GM12878 (cell line): ENCODE measurements at regions of chr12 and their contacts with region 1.

Region 1: DNA sequence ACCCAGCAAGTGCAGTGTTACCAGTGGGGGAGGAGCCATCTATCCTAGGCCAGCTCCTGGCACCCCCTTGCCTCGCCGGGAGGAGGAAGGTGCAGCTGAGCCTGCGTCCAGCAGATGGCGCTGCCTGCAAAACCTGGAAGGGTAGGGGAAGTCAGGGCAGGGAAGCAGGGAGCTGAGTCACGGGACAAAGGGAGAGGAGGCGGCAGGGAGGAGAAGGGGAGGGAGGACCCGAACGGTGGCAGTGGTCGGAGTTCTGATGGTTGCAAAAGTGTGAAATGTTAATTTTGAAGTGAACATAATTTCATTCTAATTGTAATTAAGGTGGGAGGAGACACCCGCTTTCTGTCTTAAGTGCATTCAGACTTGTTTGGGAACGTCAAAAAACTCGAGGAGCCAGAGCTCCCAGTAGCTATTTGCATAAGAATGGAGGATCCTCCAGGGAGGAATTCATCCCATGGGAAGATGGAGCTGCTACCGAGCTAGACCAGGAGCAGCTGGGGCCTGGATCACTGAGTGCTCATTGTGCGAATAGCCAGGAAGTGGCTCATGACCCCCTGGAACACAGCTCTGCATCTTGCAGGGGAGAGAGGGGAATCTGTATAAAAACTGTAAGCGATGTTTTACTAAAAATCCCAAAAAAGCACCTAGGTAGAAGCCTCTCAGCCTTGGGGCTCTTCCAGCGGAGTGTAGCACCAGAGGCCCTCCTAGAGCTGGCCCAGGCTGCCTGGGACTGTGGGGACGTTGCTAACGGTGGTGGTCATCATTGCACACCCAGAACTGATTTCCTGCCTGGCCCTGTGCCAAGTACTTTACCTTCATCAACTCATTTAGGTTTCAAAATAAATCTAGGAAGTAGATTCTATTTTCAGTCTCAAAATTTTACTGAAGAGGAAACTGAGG is 59.5 kb downstream of the EMP1 start:
- DNase-seq: peak; percentile 28
- ATAC-seq: peak; percentile 100
- H3K4me3 ChIP-seq: no peak overlapping the region
- H3K27ac ChIP-seq: no peak overlapping the region
- H3K4me1 ChIP-seq: no peaks in the 10 kb centered on the region
- H3K27me3 ChIP-seq: 0 out of 4 replicates have a peak, but pooled peaks cover 1 to 5% of the 10 kb centered on the region in 2 experiments
- CTCF ChIP-seq: peak; percentile 89 to 98 (median 94)
- EP300 ChIP-seq: no peak
- POLR2A ChIP-seq: no peak
- RAD21 ChIP-seq: peak; percentile 65

Region 2: GRCh38 chr12:12546314-12546772 is 709.7 kb before region 1 on chr12:
- CTCF ChIA-PET with region 1: no interaction called
- POLR2A ChIA-PET with region 1: no interaction called
- RAD21 ChIA-PET with region 1: no interaction called
- SMC1A ChIA-PET with region 1: no interaction called
- in situ Hi-C with region 1: no loop called
- intact Hi-C with region 1: no loop called
- DNase-seq: no peak
- ATAC-seq: peak; percentile 9; the same call in 1 of the 3 replicates
- H3K4me3 ChIP-seq: no peak overlapping the region
- H3K27ac ChIP-seq: no peak overlapping the region
- H3K4me1 ChIP-seq: peaks cover 10% of the 10 kb centered on the region; the same call in 1 of the 2 replicates
- H3K27me3 ChIP-seq: no peaks in the 10 kb centered on the region
- CTCF ChIP-seq: no peak
- EP300 ChIP-seq: no peak
- POLR2A ChIP-seq: no peak
- RAD21 ChIP-seq: no peak

Region 3: DNA sequence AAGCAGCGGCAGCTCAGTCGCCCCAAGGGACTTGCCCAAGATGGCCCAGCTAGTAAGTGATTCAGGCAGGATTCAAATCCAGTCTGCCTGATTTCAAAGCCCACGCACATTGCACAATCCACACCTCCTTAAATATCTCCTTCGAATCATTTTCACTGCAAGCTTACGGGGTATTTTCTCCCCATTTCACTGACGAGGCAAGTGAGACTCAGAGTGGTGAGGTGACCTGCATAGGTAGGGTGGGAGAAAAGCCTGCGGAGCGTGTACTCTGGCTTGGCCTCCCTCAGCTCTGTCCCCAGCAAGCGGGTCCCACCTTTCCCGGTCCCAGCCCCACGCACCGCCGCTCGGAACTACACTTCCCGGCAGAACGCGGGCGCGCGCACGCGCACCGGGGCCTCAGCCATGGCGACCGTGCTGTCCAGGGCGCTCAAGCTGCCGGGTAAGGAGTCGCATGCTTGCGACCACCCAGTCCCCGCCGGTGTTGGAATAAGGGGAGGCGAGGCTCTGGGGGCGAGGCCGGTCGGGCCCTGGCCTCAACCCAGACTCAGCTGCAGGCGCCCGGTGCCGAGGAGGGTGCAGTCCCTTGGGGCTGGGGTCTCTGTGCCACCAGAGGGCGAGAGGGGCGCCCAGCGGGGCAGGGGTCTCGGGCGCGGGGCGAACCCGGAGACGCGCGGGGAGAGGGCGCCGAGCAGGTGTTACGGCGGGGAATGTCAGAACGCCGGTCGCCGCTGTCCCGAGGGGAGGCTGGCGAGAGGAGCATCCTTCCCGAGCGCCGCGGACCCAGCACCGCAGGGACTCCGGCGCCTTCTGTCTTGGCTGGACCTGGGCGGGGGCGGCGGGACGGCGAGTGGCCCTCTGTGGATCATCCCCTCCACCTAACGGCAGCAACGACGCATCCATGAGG is 211.8 kb before region 1 on chr12 and contains the start of gene FAM234B:
- CTCF ChIA-PET with region 1: no interaction called
- POLR2A ChIA-PET with region 1: no interaction called
- RAD21 ChIA-PET with region 1: no interaction called
- SMC1A ChIA-PET with region 1: no interaction called
- in situ Hi-C with region 1: no loop called
- intact Hi-C with region 1: no loop called
- DNase-seq: no peak
- ATAC-seq: peak; percentile 99
- H3K4me3 ChIP-seq: peak within 1 kb of the TSS; percentile 95
- H3K27ac ChIP-seq: no peak within 1 kb of the TSS
- H3K4me1 ChIP-seq: no peaks in the 10 kb centered on the region
- H3K27me3 ChIP-seq: peaks cover 0 to 8% of the 10 kb centered on the region in 2 experiments; a peak in 2 of 4 replicates
- CTCF ChIP-seq: peak in 1 of 3 experiments; percentile 23; a peak in 1 of 6 replicates
- EP300 ChIP-seq: no peak
- POLR2A ChIP-seq: peak; percentile 22; the same call in 1 of the 2 replicates
- RAD21 ChIP-seq: no peak
- polyA plus RNA-seq, gene FAM234B: 0.09 to 0.16 TPM

Region 4: GRCh38 chr12:13079440-13079906 is 176.6 kb before region 1 on chr12:
- CTCF ChIA-PET with region 1: no interaction called
- POLR2A ChIA-PET with region 1: no interaction called
- RAD21 ChIA-PET with region 1: no interaction called
- SMC1A ChIA-PET with region 1: no interaction called
- in situ Hi-C with region 1: no loop called
- intact Hi-C with region 1: no loop called
- DNase-seq: no peak
- ATAC-seq: no peak
- H3K4me3 ChIP-seq: no peak overlapping the region
- H3K27ac ChIP-seq: no peak overlapping the region
- H3K4me1 ChIP-seq: no peaks in the 10 kb centered on the region
- H3K27me3 ChIP-seq: no peaks in the 10 kb centered on the region
- CTCF ChIP-seq: no peak
- EP300 ChIP-seq: no peak
- POLR2A ChIP-seq: no peak
- RAD21 ChIP-seq: no peak

Region 5: GRCh38 chr12:13270817-13271216 is 14.8 kb after region 1 on chr12:
- CTCF ChIA-PET with region 1: interaction called, 12 read pairs
- POLR2A ChIA-PET with region 1: no interaction called
- RAD21 ChIA-PET with region 1: no interaction called
- SMC1A ChIA-PET with region 1: no interaction called
- in situ Hi-C with region 1: no loop called
- intact Hi-C with region 1: no loop called
- DNase-seq: no peak
- ATAC-seq: no peak
- H3K4me3 ChIP-seq: no peak overlapping the region
- H3K27ac ChIP-seq: no peak overlapping the region
- H3K4me1 ChIP-seq: no peaks in the 10 kb centered on the region
- H3K27me3 ChIP-seq: peaks cover 0 to 3% of the 10 kb centered on the region in 2 experiments; a peak in 1 of 4 replicates
- CTCF ChIP-seq: no peak
- EP300 ChIP-seq: no peak
- POLR2A ChIP-seq: no peak
- RAD21 ChIP-seq: no peak

Region 6: DNA sequence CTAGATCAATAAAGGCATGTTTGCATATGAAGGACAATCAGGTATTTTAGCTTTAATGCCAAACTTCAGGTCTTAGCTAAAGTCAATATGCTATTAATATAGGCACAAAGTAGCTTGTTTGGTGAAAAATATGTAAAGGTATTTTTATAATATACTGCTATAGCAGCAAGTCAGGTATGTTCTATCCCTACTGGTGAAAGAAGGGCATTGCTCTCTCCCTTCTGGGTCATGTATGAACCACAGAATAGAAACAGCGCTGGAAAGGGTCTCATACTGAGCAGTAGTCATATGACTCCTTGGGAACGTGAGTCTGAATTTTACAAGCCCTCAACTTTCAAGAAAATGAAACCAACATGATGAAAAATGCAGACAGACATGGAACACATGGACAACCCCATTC is 410.8 kb after region 1 on chr12:
- CTCF ChIA-PET with region 1: interaction called, 19 read pairs
- POLR2A ChIA-PET with region 1: no interaction called
- RAD21 ChIA-PET with region 1: no interaction called
- SMC1A ChIA-PET with region 1: interaction called, 10 read pairs
- in situ Hi-C with region 1: no loop called
- intact Hi-C with region 1: loop called (anchors 5 kb)
- DNase-seq: no peak
- ATAC-seq: peak; percentile 74
- H3K4me3 ChIP-seq: no peak overlapping the region
- H3K27ac ChIP-seq: no peak overlapping the region
- H3K4me1 ChIP-seq: no peaks in the 10 kb centered on the region
- H3K27me3 ChIP-seq: no peaks in the 10 kb centered on the region; a peak in 2 of 4 replicates
- CTCF ChIP-seq: peak in 2 of 3 experiments; percentile 24 to 39; a peak in 2 of 6 replicates
- EP300 ChIP-seq: no peak
- POLR2A ChIP-seq: no peak
- RAD21 ChIP-seq: no peak

Region 7: DNA sequence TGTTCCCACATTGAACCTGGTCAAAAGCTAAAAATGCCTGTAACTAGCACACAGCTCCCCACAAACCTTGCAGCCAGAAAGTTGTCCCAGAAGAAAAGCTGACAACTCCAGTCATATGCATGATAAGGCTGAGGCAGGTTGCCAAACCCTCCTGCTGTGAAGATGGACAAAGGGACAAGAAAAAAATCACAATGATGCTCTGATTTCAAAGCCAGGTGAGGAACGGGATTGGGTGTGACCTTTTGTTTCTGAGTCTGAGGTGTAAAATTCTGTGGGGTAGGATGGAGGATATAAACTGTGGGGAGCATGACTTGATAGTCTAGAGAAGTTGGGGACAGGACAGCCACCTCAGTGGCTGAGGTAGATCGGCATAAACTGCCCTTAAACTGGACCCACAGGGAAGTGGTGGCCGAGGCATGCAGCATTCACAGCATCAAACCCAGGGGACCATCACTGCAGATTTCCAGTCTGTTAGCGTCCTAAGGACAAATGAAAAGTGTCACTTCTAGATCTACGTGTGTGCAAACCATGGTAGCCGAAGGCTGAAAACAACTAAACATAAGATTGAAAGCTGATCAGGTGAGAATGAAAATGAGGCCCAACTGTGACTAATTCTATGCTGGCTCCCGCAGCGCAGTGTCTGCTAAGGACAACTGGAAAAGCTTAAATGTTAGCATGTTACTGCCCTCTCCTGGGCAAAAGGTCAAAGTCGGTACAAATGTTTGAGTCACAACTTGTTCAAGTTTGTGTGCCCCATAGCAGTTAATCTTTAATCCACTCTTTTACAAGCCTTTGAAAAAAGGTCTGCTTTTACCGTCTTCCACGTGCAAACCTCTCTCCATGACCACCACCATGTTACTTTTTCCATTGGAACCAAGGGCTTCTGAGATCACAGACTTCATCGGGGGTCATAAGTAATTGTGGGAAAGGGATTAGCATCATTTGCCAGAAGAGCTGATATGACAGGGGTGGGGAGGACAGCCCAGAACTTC is 685.5 kb after region 1 on chr12:
- CTCF ChIA-PET with region 1: interaction called, 17 read pairs
- POLR2A ChIA-PET with region 1: no interaction called
- RAD21 ChIA-PET with region 1: interaction called, 9 read pairs
- SMC1A ChIA-PET with region 1: no interaction called
- in situ Hi-C with region 1: no loop called
- intact Hi-C with region 1: loop called (anchors 5 kb)
- DNase-seq: no peak
- ATAC-seq: peak; percentile 92
- H3K4me3 ChIP-seq: no peak overlapping the region
- H3K27ac ChIP-seq: no peak overlapping the region
- H3K4me1 ChIP-seq: no peaks in the 10 kb centered on the region
- H3K27me3 ChIP-seq: peaks cover 0 to 3% of the 10 kb centered on the region in 2 experiments; a peak in 1 of 4 replicates
- CTCF ChIP-seq: peak; percentile 28 to 72 (median 53); a peak in 5 of 6 replicates
- EP300 ChIP-seq: no peak
- POLR2A ChIP-seq: no peak
- RAD21 ChIP-seq: peak; percentile 63